ENCODE measurements at regions of chr9 and their contacts with region 1.

Region 1: GRCh38 chr9:20573023-20573422 is 49.3 kb downstream of the MLLT3 start:
- DNase-seq: no peak
- ATAC-seq: no peak
- H3K4me3 ChIP-seq: no peak overlapping the region
- H3K4me3 Mint-ChIP-seq: no peak overlapping the region
- H3K27ac ChIP-seq: no peak overlapping the region
- H3K27ac Mint-ChIP-seq: no peak overlapping the region
- H3K4me1 ChIP-seq: no peaks in the 10 kb centered on the region
- H3K4me1 Mint-ChIP-seq: peaks cover 88% of the 10 kb centered on the region
- H3K27me3 ChIP-seq: no peaks in the 10 kb centered on the region
- H3K27me3 Mint-ChIP-seq: no peaks in the 10 kb centered on the region
- CTCF ChIP-seq: no peak

Region 2: GRCh38 chr9:19281801-19282200 is 1291.2 kb before region 1 on chr9:
- CTCF ChIA-PET with region 1: no interaction called
- POLR2A ChIA-PET with region 1: no interaction called
- intact Hi-C with region 1: no loop called
- DNase-seq: no peak
- ATAC-seq: no peak
- H3K4me3 ChIP-seq: no peak overlapping the region
- H3K4me3 Mint-ChIP-seq: no peak overlapping the region
- H3K27ac ChIP-seq: no peak overlapping the region
- H3K27ac Mint-ChIP-seq: no peak overlapping the region
- H3K4me1 ChIP-seq: peaks cover 2% of the 10 kb centered on the region
- H3K4me1 Mint-ChIP-seq: peaks cover 46% of the 10 kb centered on the region
- H3K27me3 ChIP-seq: no peaks in the 10 kb centered on the region
- H3K27me3 Mint-ChIP-seq: no peaks in the 10 kb centered on the region
- CTCF ChIP-seq: no peak

Region 3: DNA sequence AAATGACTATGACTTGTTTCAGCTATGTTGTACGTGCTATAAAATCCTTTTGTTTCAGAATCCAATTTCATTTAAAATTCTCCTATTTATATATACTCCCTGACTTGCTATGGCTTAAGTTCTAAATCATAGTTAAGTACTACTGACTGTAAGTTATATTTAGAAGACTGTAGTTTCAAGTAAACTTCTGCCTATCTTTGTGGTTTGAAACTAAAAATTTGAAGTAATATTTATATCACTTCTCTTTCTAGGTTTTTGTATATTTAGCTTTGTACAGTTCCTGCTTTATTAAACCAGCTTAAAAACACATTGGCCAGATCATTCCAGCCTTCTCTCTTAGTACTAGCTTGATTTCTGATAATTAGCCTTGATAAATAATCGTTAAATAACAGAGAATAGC is 147.0 kb before region 1 on chr9:
- CTCF ChIA-PET with region 1: no interaction called
- POLR2A ChIA-PET with region 1: no interaction called
- intact Hi-C with region 1: no loop called
- DNase-seq: no peak
- ATAC-seq: no peak
- H3K4me3 ChIP-seq: no peak overlapping the region
- H3K4me3 Mint-ChIP-seq: no peak overlapping the region
- H3K27ac ChIP-seq: no peak overlapping the region
- H3K27ac Mint-ChIP-seq: no peak overlapping the region
- H3K4me1 ChIP-seq: no peaks in the 10 kb centered on the region
- H3K4me1 Mint-ChIP-seq: peaks cover 38% of the 10 kb centered on the region
- H3K27me3 ChIP-seq: no peaks in the 10 kb centered on the region
- H3K27me3 Mint-ChIP-seq: no peaks in the 10 kb centered on the region
- CTCF ChIP-seq: no peak

Region 4: GRCh38 chr9:20593551-20593950 is 20.5 kb after region 1 on chr9:
- CTCF ChIA-PET with region 1: no interaction called
- POLR2A ChIA-PET with region 1: no interaction called
- intact Hi-C with region 1: loop called in 1 of 2 experiments (anchors 2 kb)
- DNase-seq: no peak
- ATAC-seq: no peak
- H3K4me3 ChIP-seq: no peak overlapping the region
- H3K4me3 Mint-ChIP-seq: no peak overlapping the region
- H3K27ac ChIP-seq: no peak overlapping the region
- H3K27ac Mint-ChIP-seq: no peak overlapping the region
- H3K4me1 ChIP-seq: no peaks in the 10 kb centered on the region
- H3K4me1 Mint-ChIP-seq: peaks cover 68% of the 10 kb centered on the region
- H3K27me3 ChIP-seq: no peaks in the 10 kb centered on the region
- H3K27me3 Mint-ChIP-seq: no peaks in the 10 kb centered on the region
- CTCF ChIP-seq: no peak